HepG2 (cell line): ENCODE measurements at regions of chr7 and their contacts with region 1.

Region 1: DNA sequence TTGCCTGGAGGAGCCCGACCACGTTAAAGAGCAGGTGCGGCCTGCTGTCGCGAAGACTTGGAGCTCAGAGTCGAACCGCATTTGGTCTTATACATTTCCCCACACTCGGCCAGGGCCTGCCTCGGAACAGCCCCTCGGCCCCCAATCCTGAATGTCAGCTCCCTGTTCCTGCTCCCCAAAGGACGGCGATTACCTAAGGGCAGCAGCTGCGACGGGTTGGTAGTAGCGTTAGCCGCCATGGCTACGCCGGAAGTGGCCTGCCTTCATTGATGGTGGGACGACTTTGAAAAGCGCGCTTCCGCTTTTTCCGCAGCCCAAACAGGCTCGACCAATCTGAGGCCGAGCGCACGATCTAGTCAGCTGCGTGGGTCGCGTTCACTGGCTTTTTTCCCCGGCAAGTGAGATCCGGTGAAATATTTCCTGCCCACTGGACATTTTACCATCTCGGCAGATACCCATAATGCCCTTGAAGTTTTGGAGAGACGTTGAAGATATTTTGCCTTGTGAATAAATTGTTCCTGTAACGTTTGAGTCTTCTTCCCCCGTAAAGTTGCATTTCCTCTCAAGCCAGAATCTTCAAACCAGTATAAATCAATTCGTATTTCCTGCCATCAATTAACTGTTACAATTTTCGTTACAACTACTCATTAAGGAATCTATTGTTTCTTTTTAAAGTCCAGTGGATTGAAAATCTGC is at the start of gene LSM5:
- DNase-seq: peak; percentile 89
- ATAC-seq: peak; percentile 92
- H3K4me3 ChIP-seq: peak within 1 kb of the TSS; percentile 91 to 98 (median 94)
- H3K27ac ChIP-seq: peak within 1 kb of the TSS; percentile 92
- H3K4me1 ChIP-seq: peaks cover 23% of the 10 kb centered on the region
- H3K27me3 ChIP-seq: no peaks in the 10 kb centered on the region; a peak in 1 of 5 replicates
- CTCF ChIP-seq: no peak
- EP300 ChIP-seq: peak; percentile 19 to 24; a peak in 1 of 4 replicates
- POLR2A ChIP-seq: peak; percentile 77 to 89
- RAD21 ChIP-seq: no peak
- total RNA-seq, gene LSM5: 183 and 263 TPM in 2 replicates

Region 2: DNA sequence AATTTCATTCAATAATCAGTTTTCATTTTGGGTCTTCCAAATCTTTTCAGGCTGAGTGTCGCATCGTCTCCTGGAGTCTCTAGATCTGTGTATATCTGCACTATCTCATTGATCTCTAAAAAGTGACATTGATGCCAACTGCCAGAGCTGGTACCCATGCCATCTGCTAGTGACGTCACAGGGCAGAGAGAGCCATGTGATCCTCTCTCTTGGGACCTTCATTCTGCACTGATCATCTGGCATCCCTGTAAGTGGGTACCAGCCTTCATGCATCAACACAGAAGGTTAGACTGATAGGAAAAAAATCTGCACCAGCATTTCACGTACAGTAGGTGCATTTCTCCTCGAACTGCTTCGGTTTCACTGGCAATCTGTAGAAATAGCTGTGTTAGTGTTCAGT is 1149.7 kb before region 1 on chr7 and contains the start of gene NEUROD6:
- CTCF ChIA-PET with region 1: no interaction called
- POLR2A ChIA-PET with region 1: no interaction called
- in situ Hi-C with region 1: no loop called
- intact Hi-C with region 1: no loop called
- DNase-seq: no peak
- ATAC-seq: no peak
- H3K4me3 ChIP-seq: no peak within 1 kb of the TSS
- H3K27ac ChIP-seq: no peak within 1 kb of the TSS
- H3K4me1 ChIP-seq: no peaks in the 10 kb centered on the region
- H3K27me3 ChIP-seq: peaks cover 2 to 11% of the 10 kb centered on the region in 2 experiments; a peak in 2 of 5 replicates
- CTCF ChIP-seq: no peak
- EP300 ChIP-seq: no peak
- POLR2A ChIP-seq: no peak
- RAD21 ChIP-seq: no peak
- total RNA-seq, gene NEUROD6: not detected in 2 replicates

Region 3: DNA sequence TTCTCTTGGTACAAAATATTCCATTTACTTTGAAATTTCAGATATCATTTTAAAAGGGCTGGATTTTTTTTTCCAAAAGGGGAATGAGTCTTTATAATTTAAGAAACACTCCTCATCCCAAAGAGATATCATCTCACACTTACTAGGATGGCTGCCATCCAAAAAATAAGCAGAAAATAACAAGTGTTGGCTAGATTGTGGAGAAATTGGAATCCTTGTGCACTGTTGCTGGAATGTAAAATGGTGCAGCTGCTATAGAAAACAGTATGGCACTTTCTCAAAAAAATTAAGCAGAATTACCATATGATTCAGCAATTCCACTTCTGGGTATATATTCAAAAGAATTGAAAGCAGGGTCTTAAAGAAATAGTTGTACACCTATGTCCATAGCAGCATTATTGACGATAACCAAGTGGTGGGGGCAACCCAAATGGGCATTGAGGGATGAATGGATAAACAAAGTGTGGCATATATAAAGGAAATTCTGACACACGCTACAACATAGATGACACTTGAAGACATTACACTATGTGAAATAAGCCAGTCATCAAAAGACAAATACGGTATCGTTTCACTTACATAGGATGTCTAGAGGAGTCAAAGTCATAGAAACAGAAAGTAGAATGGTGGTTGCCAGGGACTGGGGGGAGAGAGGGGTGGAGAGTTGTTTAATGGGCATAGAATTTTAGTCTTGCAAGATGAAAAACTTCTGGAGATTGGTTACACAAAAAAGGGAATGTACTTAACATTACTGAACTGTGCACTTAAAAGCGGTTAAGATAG is 53.9 kb before region 1 on chr7:
- CTCF ChIA-PET with region 1: no interaction called
- POLR2A ChIA-PET with region 1: no interaction called
- in situ Hi-C with region 1: no loop called
- intact Hi-C with region 1: no loop called
- DNase-seq: no peak
- ATAC-seq: no peak
- H3K4me3 ChIP-seq: no peak overlapping the region
- H3K27ac ChIP-seq: no peak overlapping the region
- H3K4me1 ChIP-seq: no peaks in the 10 kb centered on the region
- H3K27me3 ChIP-seq: no peaks in the 10 kb centered on the region
- CTCF ChIP-seq: no peak
- EP300 ChIP-seq: no peak
- POLR2A ChIP-seq: no peak
- RAD21 ChIP-seq: no peak

Region 4: GRCh38 chr7:32539919-32540531 is 49.8 kb after region 1 on chr7:
- CTCF ChIA-PET with region 1: no interaction called
- POLR2A ChIA-PET with region 1: interaction called, 7 read pairs
- in situ Hi-C with region 1: no loop called
- intact Hi-C with region 1: loop called (anchors 5 kb)
- DNase-seq: no peak
- ATAC-seq: no peak
- H3K4me3 ChIP-seq: no peak overlapping the region
- H3K27ac ChIP-seq: no peak overlapping the region
- H3K4me1 ChIP-seq: no peaks in the 10 kb centered on the region
- H3K27me3 ChIP-seq: no peaks in the 10 kb centered on the region
- CTCF ChIP-seq: no peak
- EP300 ChIP-seq: no peak
- POLR2A ChIP-seq: no peak
- RAD21 ChIP-seq: no peak

Region 5: GRCh38 chr7:32588657-32589056 is 98.4 kb after region 1 on chr7:
- CTCF ChIA-PET with region 1: no interaction called
- POLR2A ChIA-PET with region 1: interaction called, 7 read pairs
- in situ Hi-C with region 1: no loop called
- intact Hi-C with region 1: loop called (anchors 5 kb)
- DNase-seq: peak; percentile 36
- ATAC-seq: no peak; the same call in 2 of the 3 replicates
- H3K4me3 ChIP-seq: no peak overlapping the region
- H3K27ac ChIP-seq: peak overlapping the region; percentile 75
- H3K4me1 ChIP-seq: peaks cover 39% of the 10 kb centered on the region
- H3K27me3 ChIP-seq: no peaks in the 10 kb centered on the region
- CTCF ChIP-seq: no peak
- EP300 ChIP-seq: no peak
- POLR2A ChIP-seq: no peak
- RAD21 ChIP-seq: no peak

Region 6: GRCh38 chr7:33062782-33063443 is 572.6 kb after region 1 on chr7:
- CTCF ChIA-PET with region 1: no interaction called
- POLR2A ChIA-PET with region 1: interaction called, 3 read pairs
- in situ Hi-C with region 1: no loop called
- intact Hi-C with region 1: loop called (anchors 5 kb)
- DNase-seq: peak; percentile 90
- ATAC-seq: peak; percentile 98
- H3K4me3 ChIP-seq: peak overlapping the region; percentile 78 to 100 (median 93)
- H3K27ac ChIP-seq: peak overlapping the region; percentile 90
- H3K4me1 ChIP-seq: peaks cover 41% of the 10 kb centered on the region
- H3K27me3 ChIP-seq: no peaks in the 10 kb centered on the region
- CTCF ChIP-seq: peak; percentile 18; the same call in 1 of the 2 replicates
- EP300 ChIP-seq: no peak
- POLR2A ChIP-seq: peak; percentile 46 to 78; a peak in 3 of 4 replicates
- RAD21 ChIP-seq: no peak; the same call in 1 of the 2 replicates